Endothelial cell of umbilical vein (primary cell): ENCODE measurements at regions of chr1 and their contacts with region 1.

Region 1: GRCh38 chr1:15595809-15596617 is 11.2 kb upstream of the AGMAT start:
- DNase-seq: no peak
- H3K4me3 ChIP-seq: no peak overlapping the region
- H3K27ac ChIP-seq: no peak overlapping the region
- H3K4me1 ChIP-seq: no peaks in the 10 kb centered on the region
- H3K27me3 ChIP-seq: peaks cover 7 to 10% of the 10 kb centered on the region in 2 experiments
- CTCF ChIP-seq: no peak
- POLR2A ChIP-seq: no peak

Region 2: GRCh38 chr1:15741183-15741850 is 145.3 kb after region 1 on chr1:
- CTCF ChIA-PET with region 1: interaction called, 14 read pairs
- POLR2A ChIA-PET with region 1: no interaction called
- dilution Hi-C with region 1: no loop called
- intact Hi-C with region 1: loop called (anchors 1 kb)
- DNase-seq: peak; percentile 49
- H3K4me3 ChIP-seq: no peak overlapping the region
- H3K27ac ChIP-seq: no peak overlapping the region
- H3K4me1 ChIP-seq: no peaks in the 10 kb centered on the region
- H3K27me3 ChIP-seq: no peaks in the 10 kb centered on the region
- CTCF ChIP-seq: peak; percentile 72 to 80
- POLR2A ChIP-seq: no peak